Activated naive CD4-positive, alpha-beta T cell treated with anti-CD3 and anti-CD28 coated beads for 36 hours (primary cell): ENCODE measurements at regions of chr12 and their contacts with region 1.

Region 1: GRCh38 chr12:89949457-89950195 is 241.0 kb upstream of the ATP2B1 start:
- DNase-seq: peak; percentile 68
- H3K4me3 Mint-ChIP-seq: no peak overlapping the region
- H3K27ac Mint-ChIP-seq: no peak overlapping the region
- H3K4me1 Mint-ChIP-seq: peaks cover 39% of the 10 kb centered on the region
- H3K27me3 Mint-ChIP-seq: no peaks in the 10 kb centered on the region

Region 2: DNA sequence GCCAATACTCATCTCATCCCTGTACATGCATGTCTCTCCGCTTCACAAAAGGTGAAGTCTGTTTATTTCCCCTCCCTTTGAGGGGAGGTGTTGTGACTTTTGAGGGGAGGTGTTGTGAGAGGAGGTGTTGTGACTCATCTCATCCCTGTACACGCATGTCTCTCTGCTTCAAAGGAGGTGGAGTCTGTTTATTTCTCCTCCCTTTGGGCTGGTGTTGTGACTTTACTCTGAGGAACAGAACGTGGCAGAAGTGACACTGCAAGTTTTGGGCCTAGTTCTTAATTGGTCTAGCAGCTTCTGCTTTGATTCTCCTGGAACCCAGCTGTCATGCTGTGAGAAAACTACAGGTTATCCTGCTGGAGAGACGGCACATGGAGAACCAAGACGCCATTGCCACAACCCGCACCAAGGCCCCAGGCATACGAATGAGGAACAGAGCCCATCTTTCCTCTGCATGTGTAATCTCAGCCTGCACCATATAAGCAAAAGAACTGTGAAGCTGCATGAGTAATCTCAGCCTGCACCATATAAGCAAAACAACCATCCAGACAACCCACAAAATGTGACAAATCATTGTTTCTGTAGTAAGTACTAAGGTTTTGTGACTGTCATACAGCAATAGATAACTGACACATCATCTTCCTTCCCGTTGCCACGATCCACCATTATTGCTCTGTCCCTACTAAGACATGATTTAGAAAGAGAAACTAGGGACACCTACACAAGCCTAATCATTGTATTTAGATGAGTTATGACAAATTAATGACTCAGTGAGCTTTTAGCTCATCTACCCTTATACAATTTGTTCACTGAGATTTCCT is 455.0 kb before region 1 on chr12:
- CTCF ChIA-PET with region 1: no interaction called
- intact Hi-C with region 1: loop called (anchors 1 kb)
- DNase-seq: peak; percentile 73
- H3K4me3 Mint-ChIP-seq: peak overlapping the region; percentile 5
- H3K27ac Mint-ChIP-seq: peak overlapping the region; percentile 77
- H3K4me1 Mint-ChIP-seq: peaks cover 17% of the 10 kb centered on the region
- H3K27me3 Mint-ChIP-seq: no peaks in the 10 kb centered on the region

Region 3: DNA sequence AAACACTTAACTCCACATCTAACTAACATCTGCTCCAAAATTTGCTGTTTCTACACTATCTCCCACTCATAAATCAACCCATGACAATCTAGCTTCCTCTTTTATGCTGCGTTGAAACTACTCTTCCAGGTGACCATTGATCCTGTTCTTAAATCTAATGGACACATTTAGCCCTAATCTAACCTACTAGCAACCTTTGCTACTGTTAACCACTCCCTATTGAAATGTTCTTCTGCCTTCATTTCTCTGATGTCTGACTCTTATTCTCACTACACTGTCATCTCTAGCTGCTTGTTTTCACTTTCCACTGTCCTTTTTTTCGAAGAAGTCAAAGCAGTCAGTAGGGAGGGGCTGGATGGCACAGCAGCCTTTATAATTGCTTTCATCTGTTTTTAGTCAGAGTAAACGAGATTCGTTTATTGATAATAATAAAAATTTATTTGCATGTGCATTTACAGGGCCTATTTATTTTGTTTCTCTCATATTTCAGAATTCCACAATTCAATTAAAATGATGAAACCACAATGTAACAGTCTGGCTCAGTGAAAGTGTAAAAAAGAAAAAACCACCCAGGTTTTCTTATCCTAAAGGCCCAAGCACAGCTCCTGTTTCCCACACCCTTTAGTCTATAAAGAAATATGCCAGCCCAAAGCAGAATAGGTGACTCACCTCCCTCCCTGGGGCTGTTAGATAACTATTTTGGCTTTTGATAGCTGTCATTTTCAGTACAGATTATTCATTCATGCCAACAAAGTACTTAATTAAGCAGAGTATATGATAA is 285.9 kb before region 1 on chr12:
- CTCF ChIA-PET with region 1: no interaction called
- intact Hi-C with region 1: loop called (anchors 2 kb)
- DNase-seq: peak; percentile 38
- H3K4me3 Mint-ChIP-seq: peak overlapping the region; percentile 16
- H3K27ac Mint-ChIP-seq: peak overlapping the region; percentile 55
- H3K4me1 Mint-ChIP-seq: peaks cover 65% of the 10 kb centered on the region
- H3K27me3 Mint-ChIP-seq: no peaks in the 10 kb centered on the region

Region 4: DNA sequence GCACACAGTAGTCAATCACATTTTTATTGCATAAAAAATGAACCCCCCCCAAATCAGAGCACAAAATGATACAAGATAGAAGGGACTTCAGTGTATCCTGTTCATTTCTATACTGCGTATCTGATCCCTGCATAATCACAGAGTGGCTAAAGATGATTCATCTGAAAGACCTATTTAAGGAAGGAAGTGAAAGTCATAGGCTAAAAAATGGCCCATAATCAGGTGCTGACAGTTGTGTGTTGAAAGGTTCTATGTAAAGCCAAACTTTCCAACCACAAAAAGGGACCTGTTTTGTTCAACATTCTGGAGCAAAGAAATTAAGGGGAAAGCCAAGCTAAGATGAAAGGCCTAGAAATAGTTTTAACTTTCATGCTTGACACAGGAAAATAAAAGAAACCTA is 93.2 kb before region 1 on chr12:
- CTCF ChIA-PET with region 1: no interaction called
- intact Hi-C with region 1: loop called (anchors 1 kb)
- DNase-seq: no peak
- H3K4me3 Mint-ChIP-seq: no peak overlapping the region
- H3K27ac Mint-ChIP-seq: no peak overlapping the region
- H3K4me1 Mint-ChIP-seq: peaks cover 42% of the 10 kb centered on the region
- H3K27me3 Mint-ChIP-seq: no peaks in the 10 kb centered on the region

Region 5: DNA sequence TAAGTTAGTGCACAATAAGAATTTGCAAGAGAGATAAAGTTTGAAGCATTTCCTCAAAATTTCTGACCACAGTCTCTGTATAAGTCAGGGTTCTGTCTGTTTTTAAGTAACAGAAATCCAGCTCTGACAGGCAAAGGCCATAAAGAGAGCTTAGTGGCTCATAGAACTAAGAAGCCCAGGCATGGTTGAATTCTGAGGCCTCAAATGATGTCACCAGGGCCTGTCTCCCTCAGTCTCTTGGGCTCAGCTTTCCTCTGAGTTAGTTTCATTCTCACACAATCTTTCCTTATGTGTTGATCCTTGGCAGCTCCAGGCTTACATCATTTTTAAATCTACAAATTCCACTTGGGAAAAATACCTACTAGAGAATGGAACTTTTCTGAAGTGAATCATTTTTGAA is 67.6 kb before region 1 on chr12:
- CTCF ChIA-PET with region 1: no interaction called
- intact Hi-C with region 1: loop called (anchors 1 kb)
- DNase-seq: peak; percentile 53
- H3K4me3 Mint-ChIP-seq: no peak overlapping the region
- H3K27ac Mint-ChIP-seq: peak overlapping the region; percentile 63
- H3K4me1 Mint-ChIP-seq: peaks cover 42% of the 10 kb centered on the region
- H3K27me3 Mint-ChIP-seq: no peaks in the 10 kb centered on the region

Region 6: GRCh38 chr12:89960011-89960507 is 10.4 kb after region 1 on chr12:
- CTCF ChIA-PET with region 1: interaction called, 5 read pairs
- intact Hi-C with region 1: loop called (anchors 1 kb)
- DNase-seq: peak; percentile 51
- H3K4me3 Mint-ChIP-seq: no peak overlapping the region
- H3K27ac Mint-ChIP-seq: no peak overlapping the region
- H3K4me1 Mint-ChIP-seq: peaks cover 14% of the 10 kb centered on the region
- H3K27me3 Mint-ChIP-seq: no peaks in the 10 kb centered on the region

Region 7: DNA sequence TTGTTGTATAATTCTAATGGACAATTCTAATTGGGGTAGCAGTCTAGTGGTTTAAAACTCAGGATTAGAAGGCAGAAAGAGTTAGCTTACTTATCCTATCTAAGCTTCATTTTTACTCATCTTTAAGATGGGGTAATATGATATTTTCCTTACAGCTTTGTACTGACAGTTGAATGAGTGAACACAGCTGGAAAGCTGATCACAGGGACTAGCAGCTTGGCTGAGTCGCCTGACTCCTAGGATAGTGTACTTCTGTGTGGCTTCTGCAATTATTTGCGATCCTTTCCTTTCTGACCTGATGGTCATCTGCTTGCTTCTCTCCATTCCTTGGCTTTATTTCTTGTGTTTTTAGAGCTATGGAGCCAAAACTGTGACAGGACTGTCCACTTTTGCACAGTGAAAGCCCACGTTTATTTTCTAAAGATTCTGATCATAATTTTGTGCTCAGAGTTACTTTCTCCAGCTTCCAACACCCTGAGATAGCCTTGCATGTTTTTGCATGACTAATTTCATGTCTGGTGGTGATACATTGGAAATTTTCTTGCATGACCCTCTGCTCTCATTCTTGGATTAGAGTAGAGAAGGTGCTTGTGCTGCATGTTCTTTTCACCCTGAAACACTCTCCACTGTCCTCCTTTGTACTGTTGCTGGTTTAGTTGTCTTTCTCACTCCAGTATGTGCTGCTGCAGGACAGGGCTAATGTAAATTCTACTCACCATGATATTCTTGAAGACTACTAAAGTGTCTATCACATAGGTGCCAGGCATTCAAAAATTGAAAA is 136.1 kb after region 1 on chr12:
- CTCF ChIA-PET with region 1: no interaction called
- intact Hi-C with region 1: loop called (anchors 5 kb)
- DNase-seq: no peak
- H3K4me3 Mint-ChIP-seq: no peak overlapping the region
- H3K27ac Mint-ChIP-seq: no peak overlapping the region
- H3K4me1 Mint-ChIP-seq: peaks cover 3% of the 10 kb centered on the region
- H3K27me3 Mint-ChIP-seq: no peaks in the 10 kb centered on the region